Naive thymus-derived CD4-positive, alpha-beta T cell (primary cell): ENCODE measurements at regions of chr17 and their contacts with region 1.

Region 1: GRCh38 chr17:40559954-40560591 is 5.2 kb downstream of the CCR7 start:
- DNase-seq: peak; percentile 74 to 88 (median 82)
- ATAC-seq: peak; percentile 60
- H3K4me3 ChIP-seq: peak overlapping the region; percentile 90
- H3K4me3 Mint-ChIP-seq: peak overlapping the region; percentile 90 to 100 (median 98)
- H3K27ac ChIP-seq: peak overlapping the region; percentile 99
- H3K27ac Mint-ChIP-seq: peak overlapping the region; percentile 92 to 100 (median 100)
- H3K4me1 ChIP-seq: peaks cover 50 to 52% of the 10 kb centered on the region in 2 donors
- H3K4me1 Mint-ChIP-seq: peaks cover 39 to 88% (median 58%) of the 10 kb centered on the region in 7 donors
- H3K27me3 ChIP-seq: no peaks in the 10 kb centered on the region
- H3K27me3 Mint-ChIP-seq: peaks cover 0 to under 1% (median 0%) of the 10 kb centered on the region in 5 donors

Region 2: DNA sequence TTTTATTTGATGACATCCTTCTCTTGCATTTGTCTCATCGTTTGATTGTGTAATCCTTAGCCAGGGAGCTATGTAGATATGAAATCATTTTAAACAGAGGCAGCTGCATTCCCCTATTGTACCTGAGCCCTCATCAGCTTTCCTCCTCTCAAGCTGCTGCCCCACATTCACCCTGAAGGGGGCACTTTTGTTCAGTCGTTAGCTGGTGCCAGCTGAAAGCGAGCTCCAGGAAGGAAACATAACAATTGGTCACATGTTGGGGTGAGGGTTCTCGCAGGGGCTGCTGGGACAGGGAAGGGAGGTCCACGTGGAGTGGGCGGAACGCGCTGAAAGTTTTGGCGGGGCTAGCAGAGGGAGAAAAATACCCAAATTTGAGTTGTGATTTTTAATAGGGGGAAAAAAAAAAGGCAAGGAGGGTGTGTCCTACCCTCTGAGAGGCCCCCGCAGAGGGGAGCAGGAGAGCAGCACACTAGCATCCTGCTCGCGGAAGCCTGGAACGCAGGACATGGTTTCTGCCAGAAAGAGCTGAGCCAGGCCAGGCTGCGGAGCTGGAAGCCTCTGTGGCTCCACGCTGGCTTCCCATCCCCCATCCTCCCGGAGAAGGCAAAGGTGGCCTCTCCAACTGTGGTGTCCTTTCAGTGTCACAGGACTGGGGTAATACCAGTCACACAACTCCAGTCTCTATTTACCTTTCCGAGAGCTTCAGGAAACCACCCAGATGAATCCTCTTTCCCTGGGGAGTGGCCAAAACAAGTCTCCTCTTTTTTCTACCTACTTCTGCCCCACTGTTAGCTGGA is 446.8 kb before region 1 on chr17:
- CTCF ChIA-PET with region 1: no interaction called
- POLR2A ChIA-PET with region 1: no interaction called
- intact Hi-C with region 1: no loop called
- DNase-seq: peak; percentile 69 to 95 (median 93)
- ATAC-seq: peak; percentile 89
- H3K4me3 ChIP-seq: peak overlapping the region; percentile 58
- H3K4me3 Mint-ChIP-seq: peak overlapping the region; percentile 75 to 98 (median 85)
- H3K27ac ChIP-seq: peak overlapping the region; percentile 69
- H3K27ac Mint-ChIP-seq: peak overlapping the region; percentile 57 to 100 (median 91)
- H3K4me1 ChIP-seq: peaks cover 52 to 55% of the 10 kb centered on the region in 2 donors
- H3K4me1 Mint-ChIP-seq: peaks cover 41 to 67% (median 56%) of the 10 kb centered on the region in 7 donors
- H3K27me3 ChIP-seq: no peaks in the 10 kb centered on the region
- H3K27me3 Mint-ChIP-seq: no peaks in the 10 kb centered on the region

Region 3: DNA sequence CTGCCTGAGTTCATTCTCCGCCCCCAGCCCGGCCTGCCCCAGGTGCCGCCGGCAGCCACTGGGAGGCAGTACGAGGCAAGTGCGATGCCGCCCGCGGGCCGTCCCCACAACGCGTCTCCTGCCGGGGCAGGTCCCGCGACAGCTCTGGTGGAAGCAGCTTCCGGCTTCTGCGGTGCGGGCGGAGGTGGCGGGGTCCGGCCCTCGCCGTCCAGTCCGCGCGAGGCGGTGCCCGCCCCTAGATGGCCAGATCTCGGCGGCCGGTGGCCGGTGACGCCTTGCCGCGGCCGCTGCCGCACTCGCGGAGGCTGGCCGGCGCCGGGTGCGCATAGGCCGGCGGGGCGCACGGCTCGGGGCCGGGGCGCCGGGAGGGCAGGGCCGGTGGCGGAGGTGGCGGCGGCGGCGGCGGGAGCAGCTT is 197.4 kb before region 1 on chr17:
- CTCF ChIA-PET with region 1: interaction called, 5 read pairs
- POLR2A ChIA-PET with region 1: interaction called, 4 read pairs
- intact Hi-C with region 1: loop called (anchors 1 kb)
- DNase-seq: peak; percentile 60 to 90 (median 74)
- ATAC-seq: peak; percentile 88
- H3K4me3 ChIP-seq: peak overlapping the region; percentile 35
- H3K4me3 Mint-ChIP-seq: peak overlapping the region; percentile 10 to 87 (median 70)
- H3K27ac ChIP-seq: no peak overlapping the region
- H3K27ac Mint-ChIP-seq: peak overlapping the region in 1 of 9 donors; percentile 85
- H3K4me1 ChIP-seq: peaks cover 4 to 7% of the 10 kb centered on the region in 2 donors
- H3K4me1 Mint-ChIP-seq: peaks cover 4 to 37% (median 12%) of the 10 kb centered on the region in 7 donors
- H3K27me3 ChIP-seq: no peaks in the 10 kb centered on the region
- H3K27me3 Mint-ChIP-seq: peaks cover 0 to 23% (median 8%) of the 10 kb centered on the region in 5 donors

Region 4: DNA sequence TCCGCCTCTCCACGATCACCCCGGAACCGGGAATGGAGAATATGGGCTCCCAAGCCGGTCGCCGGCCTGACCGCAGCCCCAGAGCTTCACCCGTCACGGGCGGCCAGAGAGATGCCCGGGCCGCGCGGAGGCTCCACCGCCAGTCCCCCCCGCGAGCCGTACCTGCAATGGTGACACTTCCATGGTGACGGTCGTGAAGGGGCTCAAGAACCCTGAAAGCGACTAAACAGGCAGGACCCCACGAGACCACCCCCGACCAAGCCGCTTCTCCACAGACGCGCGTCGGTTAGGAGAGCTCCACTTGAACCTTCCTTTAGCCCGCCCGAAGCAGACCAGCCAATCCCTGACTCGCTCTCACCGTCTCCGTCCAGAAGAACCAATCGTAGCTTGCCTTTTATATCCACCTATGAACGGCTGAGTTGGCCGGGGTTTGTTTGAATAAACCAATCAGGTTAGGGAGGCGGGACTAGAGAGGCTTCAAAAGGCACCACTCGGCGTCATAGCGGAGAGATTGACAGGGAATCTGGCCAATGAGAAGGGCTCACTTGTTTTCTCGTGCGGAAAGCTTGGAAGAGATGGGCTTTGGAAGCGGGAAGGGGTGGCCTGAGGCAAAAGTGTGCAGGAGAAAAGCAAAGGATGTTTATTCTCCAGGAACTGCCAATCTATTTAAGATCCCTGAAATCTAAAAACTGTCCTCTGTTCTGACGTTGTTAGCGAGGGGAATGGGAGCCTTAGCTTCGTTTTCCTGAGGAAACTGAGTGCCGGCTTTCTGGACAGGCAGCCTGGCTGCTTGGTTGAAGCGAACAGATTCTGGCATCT is 142.3 kb before region 1 on chr17 and contains the start of gene TOP2A:
- CTCF ChIA-PET with region 1: interaction called, 3 read pairs
- POLR2A ChIA-PET with region 1: interaction called, 6 read pairs
- intact Hi-C with region 1: loop called in 1 of 2 experiments (anchors 1 kb)
- DNase-seq: peak; percentile 92 to 98 (median 98)
- ATAC-seq: peak; percentile 100
- H3K4me3 ChIP-seq: peak within 1 kb of the TSS; percentile 96
- H3K4me3 Mint-ChIP-seq: peak within 1 kb of the TSS; percentile 87 to 99 (median 92)
- H3K27ac ChIP-seq: peak within 1 kb of the TSS; percentile 71
- H3K27ac Mint-ChIP-seq: peak within 1 kb of the TSS; percentile 75 to 97 (median 90)
- H3K4me1 ChIP-seq: peaks cover 0 to 16% of the 10 kb centered on the region in 2 donors
- H3K4me1 Mint-ChIP-seq: peaks cover 6 to 41% (median 23%) of the 10 kb centered on the region in 7 donors
- H3K27me3 ChIP-seq: peaks cover 0 to 5% of the 10 kb centered on the region in 2 donors
- H3K27me3 Mint-ChIP-seq: peaks cover 0 to 2% (median 0%) of the 10 kb centered on the region in 5 donors
- total RNA-seq, gene TOP2A: 0.54 to 273 (median 1.2) TPM

Region 5: DNA sequence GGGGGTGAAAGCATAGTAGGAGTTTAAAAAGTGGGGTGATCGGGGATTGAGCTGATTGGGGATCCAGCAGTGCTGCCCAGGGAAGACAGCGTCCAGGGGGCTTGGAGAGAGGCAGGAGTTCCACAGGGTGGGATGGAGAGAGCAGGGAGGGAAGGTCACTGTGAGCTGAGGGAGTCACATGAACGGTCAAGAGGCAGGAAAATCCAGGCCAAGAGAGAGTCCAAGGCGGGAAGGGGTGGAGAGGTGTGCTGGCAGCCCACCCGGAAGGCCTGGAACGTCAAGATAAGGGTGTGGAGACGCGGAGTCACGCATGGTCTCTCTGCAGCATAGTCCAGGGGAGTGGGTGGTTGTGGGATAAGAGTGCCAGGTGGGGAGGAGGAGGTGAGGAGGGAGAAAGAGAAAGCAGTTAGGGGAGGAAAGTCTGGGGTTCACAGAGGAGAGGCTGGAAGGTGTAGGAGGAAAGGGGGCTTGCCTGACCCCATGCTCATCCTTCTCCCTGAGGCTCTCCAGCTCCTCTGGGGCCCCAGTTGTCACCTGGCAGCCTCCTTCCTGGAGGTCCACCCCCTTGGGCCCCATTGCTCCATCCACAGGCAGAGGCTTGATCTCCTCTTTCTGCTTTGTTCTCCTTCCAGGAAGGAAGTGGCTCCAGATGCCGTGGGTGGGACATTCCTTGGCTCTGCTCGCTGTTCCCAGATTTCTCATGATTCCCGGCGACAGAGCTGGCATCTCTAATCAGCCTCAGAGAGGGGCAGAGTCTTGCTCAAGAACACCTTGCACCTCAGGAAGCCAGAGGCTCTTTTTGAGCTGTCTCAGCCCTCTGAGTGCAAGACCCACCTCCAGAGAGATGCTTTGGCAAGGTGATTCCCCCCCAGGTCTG is 23.5 kb before region 1 on chr17:
- CTCF ChIA-PET with region 1: interaction called, 88 read pairs
- POLR2A ChIA-PET with region 1: interaction called, 1,524 read pairs
- intact Hi-C with region 1: loop called (anchors 1 kb)
- DNase-seq: peak in 1 of 9 donors; percentile 7
- ATAC-seq: no peak
- H3K4me3 ChIP-seq: no peak overlapping the region
- H3K4me3 Mint-ChIP-seq: peak overlapping the region in 6 of 10 donors; percentile 8 to 43 (median 23)
- H3K27ac ChIP-seq: no peak overlapping the region
- H3K27ac Mint-ChIP-seq: peak overlapping the region; percentile 77 to 99 (median 96)
- H3K4me1 ChIP-seq: peaks cover 68 to 81% of the 10 kb centered on the region in 2 donors
- H3K4me1 Mint-ChIP-seq: peaks cover 64 to 100% (median 94%) of the 10 kb centered on the region in 7 donors
- H3K27me3 ChIP-seq: no peaks in the 10 kb centered on the region
- H3K27me3 Mint-ChIP-seq: peaks cover 0 to 3% (median 0%) of the 10 kb centered on the region in 5 donors

Region 6: GRCh38 chr17:40582328-40582901 is 22.3 kb after region 1 on chr17:
- CTCF ChIA-PET with region 1: interaction called, 54 read pairs
- POLR2A ChIA-PET with region 1: interaction called, 1,524 read pairs
- intact Hi-C with region 1: loop called (anchors 1 kb)
- DNase-seq: peak in 7 of 9 donors; percentile 75 to 90 (median 86)
- ATAC-seq: peak; percentile 91
- H3K4me3 ChIP-seq: peak overlapping the region; percentile 46
- H3K4me3 Mint-ChIP-seq: peak overlapping the region; percentile 73 to 88 (median 77)
- H3K27ac ChIP-seq: peak overlapping the region; percentile 84
- H3K27ac Mint-ChIP-seq: peak overlapping the region; percentile 91 to 99 (median 96)
- H3K4me1 ChIP-seq: peaks cover 27 to 76% of the 10 kb centered on the region in 2 donors
- H3K4me1 Mint-ChIP-seq: peaks cover 63 to 100% (median 97%) of the 10 kb centered on the region in 7 donors
- H3K27me3 ChIP-seq: no peaks in the 10 kb centered on the region
- H3K27me3 Mint-ChIP-seq: no peaks in the 10 kb centered on the region

Region 7: DNA sequence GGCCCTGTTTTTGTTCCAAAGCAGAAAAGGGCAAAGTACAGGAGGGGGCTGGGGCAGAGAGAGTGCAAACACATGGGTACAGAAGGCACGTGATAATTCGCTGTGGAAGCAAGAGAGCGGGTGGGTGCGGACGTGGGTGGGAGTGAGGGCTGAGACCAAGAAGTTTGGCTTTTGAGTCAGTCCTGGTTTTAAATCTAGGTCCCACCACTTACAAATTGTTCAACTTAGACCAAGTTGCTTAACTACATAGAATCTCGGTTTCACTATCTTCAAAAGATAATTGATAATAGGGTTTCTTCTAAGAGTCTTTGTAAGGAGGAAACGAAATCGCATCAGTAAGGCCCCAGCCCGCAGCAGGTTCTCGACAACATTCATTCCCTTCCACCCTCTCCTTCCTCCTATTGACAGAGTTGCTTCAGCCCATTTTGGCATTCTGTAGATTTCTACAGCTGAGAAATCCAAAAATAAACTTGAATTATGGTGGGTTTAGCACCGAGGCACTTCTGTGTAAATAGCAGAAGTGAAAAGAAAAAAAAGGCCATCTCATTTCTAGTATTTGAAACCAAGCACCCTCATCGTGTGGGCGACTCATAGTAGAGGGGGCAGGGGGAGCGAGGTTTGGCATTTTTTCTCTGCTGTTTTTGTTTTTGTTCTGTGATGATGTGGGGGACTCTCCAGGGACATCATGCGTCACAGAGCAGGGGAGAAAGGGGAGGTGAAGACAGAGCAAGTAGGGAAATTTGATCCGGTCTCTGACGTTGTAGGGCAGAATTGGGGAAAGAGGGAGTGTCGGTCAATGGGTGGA is 38.8 kb after region 1 on chr17:
- CTCF ChIA-PET with region 1: interaction called, 75 read pairs
- POLR2A ChIA-PET with region 1: interaction called, 2,132 read pairs
- intact Hi-C with region 1: loop called (anchors 1 kb)
- DNase-seq: peak in 8 of 9 donors; percentile 67 to 93 (median 80)
- ATAC-seq: peak; percentile 80
- H3K4me3 ChIP-seq: peak overlapping the region; percentile 25
- H3K4me3 Mint-ChIP-seq: peak overlapping the region; percentile 53 to 88 (median 76)
- H3K27ac ChIP-seq: peak overlapping the region; percentile 94
- H3K27ac Mint-ChIP-seq: peak overlapping the region; percentile 95 to 100 (median 99)
- H3K4me1 ChIP-seq: peaks cover 62 to 98% of the 10 kb centered on the region in 2 donors
- H3K4me1 Mint-ChIP-seq: peaks cover 64 to 100% (median 96%) of the 10 kb centered on the region in 7 donors
- H3K27me3 ChIP-seq: no peaks in the 10 kb centered on the region
- H3K27me3 Mint-ChIP-seq: no peaks in the 10 kb centered on the region

Region 8: GRCh38 chr17:40726919-40727318 is 166.8 kb after region 1 on chr17:
- CTCF ChIA-PET with region 1: no interaction called
- POLR2A ChIA-PET with region 1: interaction called, 3 read pairs
- intact Hi-C with region 1: loop called in 1 of 2 experiments (anchors 2 kb)
- DNase-seq: peak in 5 of 9 donors; percentile 4 to 37 (median 23)
- ATAC-seq: no peak
- H3K4me3 ChIP-seq: no peak overlapping the region
- H3K4me3 Mint-ChIP-seq: no peak overlapping the region
- H3K27ac ChIP-seq: no peak overlapping the region
- H3K27ac Mint-ChIP-seq: no peak overlapping the region
- H3K4me1 ChIP-seq: no peaks in the 10 kb centered on the region
- H3K4me1 Mint-ChIP-seq: peaks cover 0 to 2% (median 0%) of the 10 kb centered on the region in 7 donors
- H3K27me3 ChIP-seq: peaks cover 0 to 3% of the 10 kb centered on the region in 2 donors
- H3K27me3 Mint-ChIP-seq: peaks cover 5 to 44% (median 29%) of the 10 kb centered on the region in 5 donors

Region 9: DNA sequence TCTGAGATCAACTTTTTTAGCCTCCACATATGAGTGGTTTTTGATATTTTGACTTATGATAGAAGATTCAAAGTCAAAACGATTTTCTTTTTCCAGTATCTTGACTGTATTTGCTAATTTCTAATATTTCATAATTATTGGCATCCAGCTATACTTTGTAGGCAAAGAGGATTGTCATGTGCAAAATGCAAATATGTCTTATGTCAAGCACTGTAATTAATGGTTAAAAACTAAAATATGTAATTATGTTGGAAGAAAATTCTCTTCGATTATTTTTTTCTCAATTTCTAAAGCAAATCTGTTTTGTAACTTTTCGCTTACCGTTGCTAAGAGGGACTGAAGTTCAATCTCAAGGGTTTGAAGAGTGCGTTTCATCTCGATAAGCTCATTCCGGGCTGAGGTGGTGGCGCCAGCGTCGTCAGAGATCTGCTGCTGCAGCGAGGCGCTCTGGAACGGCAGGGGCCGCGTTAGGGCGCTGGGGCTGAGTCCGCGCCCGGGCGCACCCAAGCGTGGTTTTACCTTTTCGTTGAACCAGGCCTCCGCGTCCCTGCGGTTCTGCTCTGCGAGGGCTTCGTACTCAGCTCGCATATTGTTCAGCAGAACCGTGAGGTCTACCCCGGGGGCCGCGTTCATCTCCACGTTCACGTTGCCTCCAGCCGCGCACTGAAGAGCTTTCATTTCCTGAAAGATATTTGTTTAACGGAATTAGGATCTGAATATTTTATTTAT is 219.3 kb after region 1 on chr17:
- CTCF ChIA-PET with region 1: no interaction called
- POLR2A ChIA-PET with region 1: no interaction called
- intact Hi-C with region 1: no loop called
- DNase-seq: peak in 5 of 9 donors; percentile 8 to 28 (median 17)
- ATAC-seq: peak; percentile 47
- H3K4me3 ChIP-seq: no peak overlapping the region
- H3K4me3 Mint-ChIP-seq: peak overlapping the region; percentile 5 to 73 (median 66)
- H3K27ac ChIP-seq: no peak overlapping the region
- H3K27ac Mint-ChIP-seq: no peak overlapping the region
- H3K4me1 ChIP-seq: no peaks in the 10 kb centered on the region
- H3K4me1 Mint-ChIP-seq: peaks cover 0 to 11% (median 2%) of the 10 kb centered on the region in 7 donors
- H3K27me3 ChIP-seq: peaks cover 0 to 3% of the 10 kb centered on the region in 2 donors
- H3K27me3 Mint-ChIP-seq: peaks cover 52 to 73% (median 59%) of the 10 kb centered on the region in 5 donors

Region 10: DNA sequence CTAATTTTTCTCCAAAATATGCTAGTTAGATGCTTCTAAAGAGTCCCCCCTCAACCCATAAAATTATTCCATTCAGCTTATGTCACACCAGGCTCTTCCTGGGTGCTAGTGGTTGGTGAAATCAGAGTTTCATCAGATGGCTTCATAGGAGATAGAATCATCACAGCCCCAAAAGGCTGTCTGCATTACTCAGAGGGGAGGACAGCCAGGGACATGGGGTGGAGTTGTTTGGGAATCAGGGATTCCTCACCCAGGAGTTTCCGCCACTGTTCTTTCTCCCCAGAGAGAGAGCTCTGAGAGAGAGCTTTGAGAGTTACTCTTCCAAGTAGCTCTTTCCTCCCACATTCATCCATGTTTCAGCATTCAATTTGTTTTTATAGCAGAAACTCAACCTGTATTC is 822.3 kb after region 1 on chr17:
- CTCF ChIA-PET with region 1: no interaction called
- POLR2A ChIA-PET with region 1: no interaction called
- intact Hi-C with region 1: no loop called
- DNase-seq: no peak
- ATAC-seq: no peak
- H3K4me3 ChIP-seq: no peak overlapping the region
- H3K4me3 Mint-ChIP-seq: no peak overlapping the region
- H3K27ac ChIP-seq: no peak overlapping the region
- H3K27ac Mint-ChIP-seq: no peak overlapping the region
- H3K4me1 ChIP-seq: peaks cover 0 to 8% of the 10 kb centered on the region in 2 donors
- H3K4me1 Mint-ChIP-seq: peaks cover 0 to 16% (median 15%) of the 10 kb centered on the region in 7 donors
- H3K27me3 ChIP-seq: no peaks in the 10 kb centered on the region
- H3K27me3 Mint-ChIP-seq: peaks cover 0 to 15% (median 0%) of the 10 kb centered on the region in 5 donors